BJ (cell line): ENCODE measurements at regions of chr12 and their contacts with region 1.

Region 1: DNA sequence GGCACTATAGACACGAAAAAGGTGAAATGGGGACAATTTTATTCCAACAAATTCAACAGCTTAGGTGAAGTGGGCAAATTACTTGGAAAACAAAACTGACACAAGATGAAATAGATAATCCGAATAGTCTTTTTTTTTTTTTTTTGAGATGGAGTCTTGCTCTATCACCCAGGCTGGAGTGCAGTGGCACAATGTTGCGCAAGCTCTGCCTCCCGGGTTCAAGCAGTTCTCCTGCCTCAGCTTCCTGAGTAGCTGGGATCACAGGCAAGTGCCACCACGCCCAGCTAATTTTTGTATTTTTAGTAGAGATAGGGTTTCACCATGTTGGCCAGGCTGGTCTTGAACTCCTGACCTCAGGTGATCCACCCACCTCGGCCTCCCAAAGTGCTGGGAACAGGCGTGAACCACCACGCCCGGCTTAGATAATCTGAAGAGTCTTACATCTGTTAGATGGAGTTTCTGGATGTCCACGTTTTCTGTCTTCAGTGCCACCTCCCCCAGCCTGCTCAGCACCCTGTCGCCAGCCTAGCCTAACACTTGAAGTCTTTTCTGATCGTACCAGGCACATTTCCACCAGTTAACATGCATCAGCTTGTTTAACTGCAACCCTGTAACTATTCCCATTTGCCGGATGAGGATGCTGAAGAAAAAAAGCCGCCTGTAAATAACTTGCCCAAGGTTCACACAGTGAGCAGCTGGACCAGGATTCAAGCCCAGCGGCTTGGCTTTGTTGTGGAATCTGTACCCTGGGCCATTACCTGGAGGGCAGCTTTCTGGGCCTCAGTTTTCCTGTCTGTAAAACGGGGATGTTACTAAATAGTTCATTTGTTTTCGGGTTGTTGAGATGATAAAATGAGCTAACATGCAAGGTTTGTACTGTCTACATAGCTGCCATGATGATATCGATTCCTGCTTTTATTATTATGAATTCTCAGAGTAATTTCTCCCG is 26.4 kb downstream of the FBRSL1 start:
- DNase-seq: no peak
- H3K4me3 ChIP-seq: no peak overlapping the region
- H3K27me3 ChIP-seq: no peaks in the 10 kb centered on the region
- CTCF ChIP-seq: no peak

Region 2: DNA sequence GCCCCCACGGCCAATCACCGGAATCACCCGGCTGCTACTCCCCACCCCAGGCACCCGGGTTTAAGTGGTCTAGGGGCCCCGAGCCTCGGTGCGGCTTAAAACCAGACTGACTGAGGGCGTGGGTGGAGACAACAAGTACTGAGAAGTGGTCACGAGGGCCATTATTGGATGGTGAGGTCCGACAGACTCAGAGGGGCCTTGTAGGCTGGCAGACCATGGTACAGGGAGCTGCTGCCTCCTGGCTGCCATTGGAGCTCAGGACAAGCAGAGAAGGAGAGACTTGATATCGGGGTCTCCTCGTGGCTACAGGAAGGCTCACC is 27.7 kb after region 1 on chr12:
- CTCF ChIA-PET with region 1: no interaction called
- POLR2A ChIA-PET with region 1: interaction called, 14 read pairs
- DNase-seq: no peak
- H3K4me3 ChIP-seq: no peak overlapping the region
- H3K27me3 ChIP-seq: no peaks in the 10 kb centered on the region
- CTCF ChIP-seq: no peak

Region 3: GRCh38 chr12:132651444-132652100 is 135.2 kb after region 1 on chr12:
- CTCF ChIA-PET with region 1: no interaction called
- POLR2A ChIA-PET with region 1: no interaction called
- DNase-seq: no peak
- H3K4me3 ChIP-seq: no peak overlapping the region
- H3K27me3 ChIP-seq: no peaks in the 10 kb centered on the region
- CTCF ChIP-seq: no peak